IMR-90 (cell line): ENCODE measurements at regions of chr16 and their contacts with region 1.

Region 1: GRCh38 chr16:66270333-66270927 is 96.1 kb upstream of the CDH5 start:
- DNase-seq: peak; percentile 54
- ATAC-seq: peak; percentile 72
- H3K4me3 ChIP-seq: 0 out of 2 replicates have a peak overlapping the region, but pooled peaks have one; percentile 20
- H3K27ac ChIP-seq: peak overlapping the region; percentile 86
- H3K4me1 ChIP-seq: peaks cover 25% of the 10 kb centered on the region
- H3K27me3 ChIP-seq: no peaks in the 10 kb centered on the region
- CTCF ChIP-seq: peak; percentile 97
- POLR2A ChIP-seq: 0 out of 2 replicates have a peak, but pooled peaks have one; percentile 37
- RAD21 ChIP-seq: peak; percentile 97

Region 2: GRCh38 chr16:65176603-65177002 is 1093.8 kb before region 1 on chr16:
- CTCF ChIA-PET with region 1: no interaction called
- POLR2A ChIA-PET with region 1: no interaction called
- dilution Hi-C with region 1: no loop called
- in situ Hi-C with region 1: no loop called
- intact Hi-C with region 1: loop called (anchors 5 kb)
- DNase-seq: peak; percentile 93
- ATAC-seq: peak; percentile 97
- H3K4me3 ChIP-seq: no peak overlapping the region
- H3K27ac ChIP-seq: no peak overlapping the region
- H3K4me1 ChIP-seq: peaks cover 10% of the 10 kb centered on the region
- H3K27me3 ChIP-seq: no peaks in the 10 kb centered on the region; the same call in 1 of the 2 replicates
- CTCF ChIP-seq: no peak
- POLR2A ChIP-seq: no peak
- RAD21 ChIP-seq: no peak

Region 3: DNA sequence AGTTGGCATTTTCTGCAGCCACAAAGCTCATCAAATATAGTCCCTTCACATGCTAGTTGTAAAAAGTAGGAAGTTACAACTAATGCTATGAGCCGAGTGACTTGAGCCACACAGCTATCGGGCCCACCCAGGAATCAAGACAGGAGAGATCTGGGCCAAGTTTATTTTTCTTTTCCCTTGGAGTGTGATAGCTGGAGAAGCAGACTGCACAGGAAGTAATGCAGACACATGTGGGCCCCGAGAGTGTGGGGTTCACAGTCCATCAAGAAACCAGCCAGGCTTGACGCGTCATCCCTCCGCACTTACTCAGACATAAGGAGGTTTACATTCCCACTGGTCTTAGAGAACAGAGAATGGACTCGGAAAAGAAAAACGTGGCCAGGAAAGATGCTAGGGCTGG is 745.4 kb before region 1 on chr16:
- CTCF ChIA-PET with region 1: no interaction called
- POLR2A ChIA-PET with region 1: no interaction called
- dilution Hi-C with region 1: no loop called
- in situ Hi-C with region 1: no loop called
- intact Hi-C with region 1: loop called (anchors 10 kb)
- DNase-seq: peak; percentile 97
- ATAC-seq: peak; percentile 96
- H3K4me3 ChIP-seq: no peak overlapping the region
- H3K27ac ChIP-seq: no peak overlapping the region
- H3K4me1 ChIP-seq: peaks cover 4% of the 10 kb centered on the region
- H3K27me3 ChIP-seq: peaks cover 29% of the 10 kb centered on the region
- CTCF ChIP-seq: no peak
- POLR2A ChIP-seq: no peak
- RAD21 ChIP-seq: no peak

Region 4: DNA sequence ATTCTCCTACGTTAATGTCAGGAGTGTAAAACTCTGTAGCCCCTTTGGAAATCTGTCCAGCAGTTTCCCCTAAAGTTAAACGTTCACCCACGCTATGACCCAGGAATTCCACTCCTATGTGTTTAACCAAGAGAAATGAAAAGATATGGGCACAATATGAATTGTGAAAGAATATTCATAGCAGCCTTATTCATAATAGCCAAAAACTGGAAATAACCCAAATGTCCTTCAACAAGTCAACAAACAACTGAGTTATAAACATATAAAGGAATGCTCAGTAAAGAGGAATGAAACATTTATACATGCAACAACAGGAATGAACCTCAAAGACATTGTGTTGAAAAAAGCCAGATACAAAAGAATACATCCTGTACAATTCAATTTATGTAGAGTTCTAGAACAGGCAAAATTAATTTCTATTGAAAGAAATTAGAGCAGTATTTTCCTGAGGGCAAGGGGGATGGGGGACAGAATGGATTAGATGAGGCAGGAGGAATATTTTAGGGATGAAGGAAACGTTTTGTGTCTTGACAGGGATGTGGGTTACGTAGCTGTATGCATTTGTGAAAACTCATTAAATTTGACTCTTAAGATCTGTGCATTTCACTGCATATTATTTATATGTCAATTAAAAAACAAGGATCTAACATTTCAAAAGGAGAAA is 190.6 kb before region 1 on chr16:
- CTCF ChIA-PET with region 1: no interaction called
- POLR2A ChIA-PET with region 1: no interaction called
- dilution Hi-C with region 1: no loop called
- in situ Hi-C with region 1: no loop called
- intact Hi-C with region 1: loop called (anchors 5 kb)
- DNase-seq: peak; percentile 63
- ATAC-seq: peak; percentile 73
- H3K4me3 ChIP-seq: no peak overlapping the region
- H3K27ac ChIP-seq: peak overlapping the region; percentile 60; the same call in 1 of the 2 replicates
- H3K4me1 ChIP-seq: peaks cover 6% of the 10 kb centered on the region
- H3K27me3 ChIP-seq: no peaks in the 10 kb centered on the region
- CTCF ChIP-seq: no peak
- POLR2A ChIP-seq: no peak
- RAD21 ChIP-seq: no peak

Region 5: GRCh38 chr16:66150698-66151482 is 119.5 kb before region 1 on chr16:
- CTCF ChIA-PET with region 1: interaction called, 3 read pairs
- POLR2A ChIA-PET with region 1: no interaction called
- dilution Hi-C with region 1: no loop called
- in situ Hi-C with region 1: no loop called
- intact Hi-C with region 1: loop called (anchors 2 kb)
- DNase-seq: peak; percentile 28
- ATAC-seq: no peak
- H3K4me3 ChIP-seq: no peak overlapping the region
- H3K27ac ChIP-seq: peak overlapping the region; percentile 98; the same call in 1 of the 2 replicates
- H3K4me1 ChIP-seq: peaks cover 31% of the 10 kb centered on the region
- H3K27me3 ChIP-seq: no peaks in the 10 kb centered on the region
- CTCF ChIP-seq: no peak
- POLR2A ChIP-seq: no peak
- RAD21 ChIP-seq: no peak

Region 6: DNA sequence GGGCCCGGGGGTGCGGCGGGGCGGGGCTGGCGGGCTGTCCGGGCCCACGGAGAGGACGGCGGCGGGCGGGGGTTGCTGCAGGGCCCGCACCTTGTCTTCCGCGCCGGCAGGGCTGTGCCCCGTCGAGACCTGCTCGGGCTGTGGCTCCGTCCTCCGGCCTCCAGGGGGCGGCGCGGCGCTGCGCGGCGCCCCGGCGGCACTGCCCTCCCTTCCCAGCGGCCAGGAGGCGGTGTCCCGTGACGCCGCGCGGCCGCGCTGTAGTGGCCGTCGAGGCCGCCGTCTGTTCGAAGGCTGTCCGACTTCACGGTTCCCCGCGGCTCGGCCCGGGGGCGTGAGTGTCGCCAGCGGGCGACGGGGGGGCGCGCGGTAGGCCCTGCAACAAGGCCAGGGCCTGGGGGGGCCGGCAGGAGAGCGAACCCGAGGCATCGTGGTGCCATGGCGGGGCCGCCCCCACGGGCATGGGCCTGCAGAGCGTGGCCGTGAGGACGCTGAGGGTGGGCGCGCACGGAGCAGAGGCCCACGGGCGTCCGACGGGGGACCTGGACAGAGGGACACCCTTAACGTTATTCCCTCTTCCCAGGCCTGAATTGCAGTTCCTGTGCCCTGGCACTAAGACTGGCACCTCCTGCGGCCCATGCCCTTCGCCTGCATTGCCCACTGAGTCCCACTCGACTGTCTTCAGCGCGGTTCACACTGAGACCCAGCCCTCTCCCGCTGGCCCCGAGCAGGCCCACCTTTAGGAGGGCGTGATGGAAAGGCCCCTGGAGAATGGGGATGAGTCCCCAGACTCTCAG is 1009.1 kb after region 1 on chr16 and contains the start of gene PLEKHG4:
- CTCF ChIA-PET with region 1: no interaction called
- POLR2A ChIA-PET with region 1: no interaction called
- dilution Hi-C with region 1: no loop called
- in situ Hi-C with region 1: no loop called
- intact Hi-C with region 1: no loop called
- DNase-seq: peak; percentile 66
- ATAC-seq: peak; percentile 73
- H3K4me3 ChIP-seq: peak within 1 kb of the TSS; percentile 45
- H3K27ac ChIP-seq: peak within 1 kb of the TSS; percentile 91
- H3K4me1 ChIP-seq: peaks cover 26% of the 10 kb centered on the region
- H3K27me3 ChIP-seq: no peaks in the 10 kb centered on the region
- CTCF ChIP-seq: peak; percentile 88
- POLR2A ChIP-seq: peak; percentile 39
- RAD21 ChIP-seq: peak; percentile 75
- total RNA-seq, gene PLEKHG4: 8.3 and 14.0 TPM in 2 replicates